A549 (cell line): ENCODE measurements at regions of chr2 and their contacts with region 1.

Region 1: DNA sequence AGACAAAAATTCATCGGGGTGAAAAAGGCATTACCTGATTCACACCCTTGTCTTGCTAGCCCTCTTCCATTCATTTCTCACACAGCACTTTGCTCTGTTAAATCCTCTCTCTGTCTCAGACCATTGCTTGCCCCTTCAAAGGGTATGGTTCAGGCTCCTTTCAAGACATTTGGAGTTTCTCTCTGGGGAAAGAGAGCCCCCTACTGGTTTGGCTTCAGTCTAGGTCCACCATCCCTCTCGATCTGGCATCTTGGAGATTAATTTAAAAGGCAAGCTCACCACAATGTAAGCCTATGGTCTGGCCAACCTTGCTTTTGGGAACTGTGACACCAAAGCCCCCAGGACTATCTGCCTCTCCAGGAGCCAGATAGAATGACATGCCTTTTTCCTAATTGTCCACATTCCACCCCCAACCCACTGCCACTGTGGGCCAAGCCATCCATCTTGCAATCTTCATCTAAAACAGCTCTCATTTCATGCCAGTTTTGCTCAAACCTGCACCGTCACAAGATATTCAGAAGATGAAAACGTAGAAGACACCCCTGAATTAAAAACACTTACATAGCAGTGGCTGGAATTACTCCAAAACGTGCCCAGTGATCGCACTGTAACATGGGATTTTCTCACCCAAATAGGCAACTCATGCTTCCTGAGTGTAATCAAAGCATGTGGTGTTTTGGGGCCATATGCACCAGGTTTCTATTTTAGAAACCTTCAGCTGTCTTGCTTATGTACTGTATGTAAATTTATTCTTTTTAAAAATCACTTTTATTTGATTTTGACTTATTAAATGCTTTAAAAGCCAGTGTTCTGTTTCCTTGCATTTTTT is 93.9 kb downstream of the FARSB start:
- DNase-seq: peak; percentile 40 to 53
- ATAC-seq: peak; percentile 64 to 83; a peak in 5 of 6 replicates
- H3K4me3 ChIP-seq: no peak overlapping the region
- H3K27ac ChIP-seq: no peak overlapping the region
- H3K4me1 ChIP-seq: no peaks in the 10 kb centered on the region
- CTCF ChIP-seq: peak; percentile 65
- EP300 ChIP-seq: no peak
- POLR2A ChIP-seq: no peak
- RAD21 ChIP-seq: peak; percentile 68 to 72; a peak in 4 of 5 replicates

Region 2: GRCh38 chr2:222318026-222318711 is 243.9 kb before region 1 on chr2:
- CTCF ChIA-PET with region 1: interaction called, 10 read pairs
- POLR2A ChIA-PET with region 1: no interaction called
- DNase-seq: peak; percentile 57 to 73
- ATAC-seq: peak; percentile 83 to 95
- H3K4me3 ChIP-seq: peak overlapping the region; percentile 47
- H3K27ac ChIP-seq: no peak overlapping the region
- H3K4me1 ChIP-seq: peaks cover 13% of the 10 kb centered on the region
- CTCF ChIP-seq: peak; percentile 81
- EP300 ChIP-seq: no peak
- POLR2A ChIP-seq: no peak
- RAD21 ChIP-seq: peak; percentile 76 to 77

Region 3: DNA sequence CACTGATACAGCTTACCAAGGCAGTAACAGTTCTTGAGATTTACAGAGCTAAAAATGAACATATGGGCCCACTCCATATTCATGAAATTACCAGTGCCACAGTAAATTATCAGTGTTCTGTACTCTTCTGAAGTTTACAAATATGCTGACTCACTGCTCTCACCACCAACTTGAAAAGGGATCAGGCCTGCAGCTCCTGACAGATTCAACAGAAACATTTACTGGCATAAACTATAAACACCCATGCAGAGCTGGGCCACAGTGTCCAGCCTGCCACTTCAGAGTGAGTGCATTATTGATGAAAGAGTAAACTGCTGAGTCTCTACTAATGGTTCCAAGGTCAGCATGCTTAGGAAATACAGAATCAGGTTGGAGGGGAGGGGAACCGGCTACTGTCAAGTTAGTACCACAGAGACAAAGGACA is 10.7 kb after region 1 on chr2:
- CTCF ChIA-PET with region 1: interaction called, 10 read pairs
- POLR2A ChIA-PET with region 1: no interaction called
- DNase-seq: peak in 1 of 2 experiments; percentile 18
- ATAC-seq: peak; percentile 54 to 55; a peak in 5 of 6 replicates
- H3K4me3 ChIP-seq: no peak overlapping the region
- H3K27ac ChIP-seq: peak overlapping the region; percentile 28 to 79
- H3K4me1 ChIP-seq: peaks cover 22% of the 10 kb centered on the region
- CTCF ChIP-seq: no peak
- EP300 ChIP-seq: no peak
- POLR2A ChIP-seq: no peak
- RAD21 ChIP-seq: no peak